ENCODE measurements at regions of chr1 and their contacts with region 1.

Region 1: GRCh38 chr1:241531195-241532161 is 700 bp upstream of the KMO start:
- DNase-seq: no peak

Region 2: DNA sequence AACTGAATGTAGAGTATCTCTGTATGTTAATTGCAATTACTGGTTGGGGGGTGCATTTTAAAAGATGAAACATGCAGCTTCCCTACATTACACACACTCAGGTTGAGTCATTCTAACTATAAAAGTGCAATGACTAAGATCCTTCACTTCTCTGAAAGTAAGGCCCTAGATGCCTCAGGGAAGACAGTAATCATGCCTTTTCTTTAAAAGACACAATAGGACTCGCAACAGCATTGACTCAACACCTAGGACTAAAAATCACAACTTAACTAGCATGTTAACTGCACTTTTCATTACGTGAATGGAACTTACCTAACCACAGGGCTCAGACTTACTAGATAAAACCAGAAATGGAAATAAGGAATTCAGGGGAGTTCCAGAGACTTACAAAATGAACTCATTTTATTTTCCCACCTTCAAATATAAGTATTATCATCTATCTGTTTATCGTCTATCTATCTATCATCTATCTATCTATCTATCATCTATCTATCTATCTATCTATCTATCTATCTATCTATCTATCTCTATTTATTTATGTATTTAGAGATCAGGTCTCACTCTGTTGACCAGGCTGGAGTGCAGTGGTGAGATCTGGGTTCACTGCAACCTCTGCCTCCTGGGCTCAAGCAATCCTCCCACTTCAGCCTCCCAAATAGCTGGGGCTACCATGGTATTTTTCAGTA is 60.9 kb after region 1 on chr1:
- intact Hi-C with region 1: no loop called
- DNase-seq: no peak

Region 3: GRCh38 chr1:241627453-241628259 is 96.2 kb after region 1 on chr1:
- intact Hi-C with region 1: loop called (anchors 10 kb)
- DNase-seq: peak in 18 of 42 donors; percentile 17 to 69 (median 43)

Measured in head of caudate nucleus (tissue), 42 donors.